Activated naive CD4-positive, alpha-beta T cell treated with anti-CD3 and anti-CD28 coated beads, Interleukin-2, amount 10 ng/mL, durations not matched to agents 7 days and 5 days (primary cell): ENCODE measurements at regions of chr5 and their contacts with region 1.

Region 1: GRCh38 chr5:55021410-55021809 is 2.6 kb upstream of the GZMK start:
- DNase-seq: no peak
- H3K4me3 Mint-ChIP-seq: no peak overlapping the region
- H3K27ac Mint-ChIP-seq: no peak overlapping the region
- H3K4me1 Mint-ChIP-seq: peaks cover 58% of the 10 kb centered on the region
- H3K27me3 Mint-ChIP-seq: no peaks in the 10 kb centered on the region

Region 2: DNA sequence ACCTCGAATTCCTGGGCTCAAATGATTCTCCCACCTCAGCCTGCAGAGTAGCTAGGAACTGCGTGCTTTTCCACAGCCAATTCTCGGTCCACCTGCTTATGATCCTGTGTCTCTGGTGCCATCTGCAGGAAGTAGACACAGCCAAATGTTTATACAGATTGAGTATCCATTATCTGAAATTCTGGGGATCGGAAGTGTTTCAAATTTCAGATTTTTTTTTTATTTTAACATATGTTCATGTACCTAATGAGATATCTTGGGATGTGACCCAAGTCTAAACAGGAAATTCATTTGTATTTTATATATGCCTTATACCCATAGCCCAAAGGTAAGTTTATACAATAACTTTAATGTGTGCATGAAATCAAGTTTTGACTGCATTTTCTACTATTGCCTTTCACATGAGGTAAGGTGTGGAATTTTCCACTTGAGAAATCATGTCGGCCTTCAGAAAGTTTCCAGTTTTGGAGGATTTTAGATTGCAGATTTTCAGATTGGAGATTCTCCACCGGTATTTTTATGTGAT is 125.5 kb before region 1 on chr5:
- CTCF ChIA-PET with region 1: no interaction called
- DNase-seq: peak; percentile 39
- H3K4me3 Mint-ChIP-seq: no peak overlapping the region
- H3K27ac Mint-ChIP-seq: no peak overlapping the region
- H3K4me1 Mint-ChIP-seq: peaks cover 8% of the 10 kb centered on the region
- H3K27me3 Mint-ChIP-seq: peaks cover 74% of the 10 kb centered on the region

Region 3: DNA sequence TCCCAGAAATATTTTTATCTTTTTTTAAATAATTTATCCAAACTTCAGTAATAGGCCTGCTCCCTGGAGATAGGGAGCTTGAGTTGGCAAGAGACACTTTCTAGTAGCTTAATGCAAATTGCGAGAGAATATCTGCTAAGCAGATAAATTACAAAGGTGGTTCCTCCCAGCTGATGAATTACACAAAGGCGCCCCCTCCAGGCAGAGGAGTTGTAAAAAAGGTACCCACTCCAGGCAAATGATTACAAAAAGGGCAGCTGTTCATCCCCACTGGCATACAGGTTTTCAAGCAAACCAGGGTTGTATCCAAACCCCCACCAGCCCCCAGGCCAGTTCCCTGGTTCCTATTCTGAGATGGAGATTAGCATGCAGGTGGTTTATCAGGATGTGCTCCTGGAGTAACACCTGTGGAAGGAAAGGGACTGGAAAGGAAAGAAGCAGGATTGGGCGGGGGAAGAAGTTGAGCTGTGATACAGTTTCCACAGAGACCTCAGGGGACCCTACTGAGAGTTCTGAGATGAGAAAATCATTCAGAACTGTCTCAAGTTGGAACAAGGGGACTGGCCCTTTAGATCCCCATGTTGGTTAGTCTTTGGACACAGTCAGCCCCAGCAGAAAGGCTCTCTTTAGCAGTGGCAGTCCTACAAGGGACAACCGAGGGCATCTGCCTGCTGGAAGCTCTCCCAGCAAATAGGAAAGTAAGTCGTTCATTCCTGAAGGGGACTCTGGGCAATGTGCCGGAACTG is 61.6 kb before region 1 on chr5:
- CTCF ChIA-PET with region 1: interaction called, 11 read pairs
- DNase-seq: peak; percentile 44
- H3K4me3 Mint-ChIP-seq: no peak overlapping the region
- H3K27ac Mint-ChIP-seq: no peak overlapping the region
- H3K4me1 Mint-ChIP-seq: peaks cover 11% of the 10 kb centered on the region
- H3K27me3 Mint-ChIP-seq: peaks cover 42% of the 10 kb centered on the region

Region 4: GRCh38 chr5:55004729-55005128 is 16.7 kb before region 1 on chr5:
- CTCF ChIA-PET with region 1: no interaction called
- DNase-seq: no peak
- H3K4me3 Mint-ChIP-seq: no peak overlapping the region
- H3K27ac Mint-ChIP-seq: no peak overlapping the region
- H3K4me1 Mint-ChIP-seq: peaks cover 52% of the 10 kb centered on the region
- H3K27me3 Mint-ChIP-seq: peaks cover 2% of the 10 kb centered on the region

Region 5: GRCh38 chr5:55052383-55052931 is 31.0 kb after region 1 on chr5:
- CTCF ChIA-PET with region 1: no interaction called
- DNase-seq: no peak
- H3K4me3 Mint-ChIP-seq: no peak overlapping the region
- H3K27ac Mint-ChIP-seq: no peak overlapping the region
- H3K4me1 Mint-ChIP-seq: peaks cover 19% of the 10 kb centered on the region
- H3K27me3 Mint-ChIP-seq: no peaks in the 10 kb centered on the region

Region 6: DNA sequence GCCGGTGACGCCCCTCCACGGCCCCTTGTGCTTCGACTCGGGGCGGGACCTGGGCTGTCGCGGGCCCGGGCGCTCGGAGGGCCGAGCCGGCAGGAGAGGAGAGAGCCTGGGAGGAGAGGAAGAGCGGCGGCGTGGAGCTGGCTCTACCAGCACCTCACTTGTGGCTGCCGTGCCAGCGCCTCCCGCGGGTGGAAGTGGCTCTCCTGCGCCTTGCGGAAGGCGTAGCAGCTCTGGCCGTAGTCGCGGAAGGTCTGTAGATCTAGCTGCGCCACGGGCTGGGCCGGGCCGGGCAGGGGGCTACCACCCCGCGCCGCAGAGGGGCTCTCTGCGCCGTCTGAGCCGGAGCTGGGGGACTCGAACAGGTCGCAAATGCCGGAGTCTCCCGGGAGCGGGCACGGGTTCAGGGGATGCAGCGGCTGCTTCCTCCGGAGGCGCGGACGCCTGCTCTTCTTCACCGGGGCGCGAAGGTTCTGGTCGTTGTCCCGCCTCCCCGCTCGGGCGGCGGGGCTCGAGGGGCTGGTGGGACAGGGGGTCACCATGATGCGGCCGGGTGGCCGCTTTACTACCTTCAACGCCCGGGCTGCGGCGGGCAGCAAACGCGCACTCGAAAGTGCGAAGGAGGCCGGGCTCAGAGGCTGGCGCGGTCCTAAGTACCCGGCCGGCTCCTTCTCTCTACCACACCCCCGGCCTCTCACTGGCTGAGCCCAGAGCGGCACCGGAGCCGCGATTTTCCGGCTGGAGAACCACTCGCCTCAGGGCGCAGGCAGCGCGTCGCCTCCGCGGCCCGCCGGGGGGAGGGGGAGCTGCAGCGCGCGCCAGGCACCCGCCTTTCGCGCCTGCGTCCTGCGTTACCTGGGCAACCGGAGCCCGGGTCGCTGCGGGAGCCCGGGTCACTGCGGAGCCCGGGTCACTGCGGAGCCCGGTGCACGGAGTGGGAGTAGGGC is 211.8 kb after region 1 on chr5 and contains the start of gene CCNO:
- CTCF ChIA-PET with region 1: no interaction called
- DNase-seq: peak; percentile 74
- H3K4me3 Mint-ChIP-seq: peak within 1 kb of the TSS; percentile 73
- H3K27ac Mint-ChIP-seq: peak within 1 kb of the TSS; percentile 59
- H3K4me1 Mint-ChIP-seq: peaks cover 28% of the 10 kb centered on the region
- H3K27me3 Mint-ChIP-seq: peaks cover 95% of the 10 kb centered on the region